HCT116 (cell line): ENCODE measurements at regions of chr19 and their contacts with region 1.

Region 1: GRCh38 chr19:2475702-2476450 is at the start of gene GADD45B:
- DNase-seq: peak; percentile 95
- ATAC-seq: peak; percentile 73
- H3K4me3 ChIP-seq: peak within 1 kb of the TSS; percentile 96 to 99
- H3K27ac ChIP-seq: peak within 1 kb of the TSS; percentile 78
- H3K4me1 ChIP-seq: peaks cover 18 to 45% of the 10 kb centered on the region in 2 experiments
- H3K27me3 ChIP-seq: no peaks in the 10 kb centered on the region
- CTCF ChIP-seq: no peak
- POLR2A ChIP-seq: peak; percentile 100
- RAD21 ChIP-seq: peak; percentile 54
- total RNA-seq, gene GADD45B: 37.9 TPM

Region 2: DNA sequence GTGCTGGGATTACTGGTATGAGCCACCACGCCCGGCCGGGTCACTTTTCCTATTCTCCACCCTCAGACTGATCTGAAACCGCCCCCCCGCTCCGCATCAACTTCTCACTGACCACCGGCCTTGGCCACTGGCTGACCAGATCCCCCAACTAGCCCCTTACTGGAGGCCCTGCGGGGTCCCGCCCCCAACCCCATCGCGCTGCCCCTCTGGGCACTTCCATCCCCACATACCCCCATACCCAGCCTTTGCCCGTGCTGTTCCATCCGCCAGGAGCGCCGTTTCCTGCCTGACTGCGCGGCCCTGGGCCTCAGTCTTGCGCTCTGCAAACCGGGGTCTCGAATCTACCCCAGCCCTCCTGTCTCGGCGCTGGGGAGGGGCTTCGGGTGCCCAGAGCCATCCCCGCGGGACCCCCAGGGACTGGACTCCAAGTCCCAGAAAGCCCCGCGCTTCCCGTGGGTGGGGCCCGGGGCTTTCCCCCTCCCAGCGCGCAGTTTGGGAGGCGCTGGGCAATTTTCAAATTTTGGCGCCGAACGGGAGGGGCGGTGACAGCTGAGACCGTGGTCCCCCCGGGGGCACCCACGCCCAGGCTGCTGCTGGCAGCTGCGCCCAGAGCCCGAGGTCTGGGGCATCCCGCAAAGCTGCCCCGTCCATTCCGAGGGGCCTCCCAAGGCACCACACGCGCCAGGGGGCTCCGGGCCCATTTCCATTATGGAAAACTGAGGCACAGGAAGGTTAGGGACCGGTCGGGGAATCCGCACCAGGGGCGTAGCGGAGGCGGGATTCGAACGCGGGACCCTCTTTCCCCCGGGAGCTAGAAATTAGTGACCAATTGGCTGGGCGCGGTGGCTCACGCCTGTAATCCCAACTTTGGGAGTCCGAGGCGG is 13.9 kb before region 1 on chr19:
- CTCF ChIA-PET with region 1: interaction called, 5 read pairs
- POLR2A ChIA-PET with region 1: interaction called, 44 read pairs
- RAD21 ChIA-PET with region 1: interaction called in 1 of 2 experiments, 4 read pairs
- intact Hi-C with region 1: no loop called
- DNase-seq: peak; percentile 60
- ATAC-seq: peak; percentile 73
- H3K4me3 ChIP-seq: peak overlapping the region; percentile 69 to 74
- H3K27ac ChIP-seq: peak overlapping the region; percentile 88
- H3K4me1 ChIP-seq: peaks cover 9 to 53% of the 10 kb centered on the region in 2 experiments; a peak in 3 of 4 replicates
- H3K27me3 ChIP-seq: no peaks in the 10 kb centered on the region
- CTCF ChIP-seq: peak in 2 of 3 experiments; percentile 24 to 30; a peak in 4 of 6 replicates
- POLR2A ChIP-seq: no peak
- RAD21 ChIP-seq: no peak

Region 3: DNA sequence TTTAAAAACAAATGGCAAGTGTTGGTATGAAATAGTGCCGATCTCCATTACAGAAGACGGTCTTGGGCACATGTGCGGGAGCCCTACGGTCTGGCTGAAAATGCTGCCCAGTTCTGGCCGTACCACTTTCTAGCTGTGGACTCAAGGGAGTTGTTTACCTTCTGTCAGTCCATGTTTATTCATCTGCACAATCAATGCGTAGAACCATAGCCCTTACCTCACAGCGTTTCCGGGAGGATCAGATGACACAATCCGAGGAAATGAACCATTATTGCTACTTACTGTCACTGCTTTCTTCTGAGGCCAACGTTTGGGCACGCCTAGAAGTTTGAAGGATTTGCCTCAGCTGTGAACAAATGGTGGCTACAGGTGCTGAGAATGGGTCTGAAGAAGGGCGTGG is 31.2 kb after region 1 on chr19:
- CTCF ChIA-PET with region 1: no interaction called
- POLR2A ChIA-PET with region 1: interaction called, 46 read pairs
- RAD21 ChIA-PET with region 1: interaction called in 1 of 2 experiments, 5 read pairs
- intact Hi-C with region 1: no loop called
- DNase-seq: peak; percentile 75
- ATAC-seq: peak; percentile 29
- H3K4me3 ChIP-seq: peak overlapping the region; percentile 10 to 48; a peak in 3 of 4 replicates
- H3K27ac ChIP-seq: peak overlapping the region; percentile 55
- H3K4me1 ChIP-seq: peaks cover 42 to 64% of the 10 kb centered on the region in 2 experiments
- H3K27me3 ChIP-seq: no peaks in the 10 kb centered on the region
- CTCF ChIP-seq: no peak
- POLR2A ChIP-seq: no peak
- RAD21 ChIP-seq: no peak

Region 4: DNA sequence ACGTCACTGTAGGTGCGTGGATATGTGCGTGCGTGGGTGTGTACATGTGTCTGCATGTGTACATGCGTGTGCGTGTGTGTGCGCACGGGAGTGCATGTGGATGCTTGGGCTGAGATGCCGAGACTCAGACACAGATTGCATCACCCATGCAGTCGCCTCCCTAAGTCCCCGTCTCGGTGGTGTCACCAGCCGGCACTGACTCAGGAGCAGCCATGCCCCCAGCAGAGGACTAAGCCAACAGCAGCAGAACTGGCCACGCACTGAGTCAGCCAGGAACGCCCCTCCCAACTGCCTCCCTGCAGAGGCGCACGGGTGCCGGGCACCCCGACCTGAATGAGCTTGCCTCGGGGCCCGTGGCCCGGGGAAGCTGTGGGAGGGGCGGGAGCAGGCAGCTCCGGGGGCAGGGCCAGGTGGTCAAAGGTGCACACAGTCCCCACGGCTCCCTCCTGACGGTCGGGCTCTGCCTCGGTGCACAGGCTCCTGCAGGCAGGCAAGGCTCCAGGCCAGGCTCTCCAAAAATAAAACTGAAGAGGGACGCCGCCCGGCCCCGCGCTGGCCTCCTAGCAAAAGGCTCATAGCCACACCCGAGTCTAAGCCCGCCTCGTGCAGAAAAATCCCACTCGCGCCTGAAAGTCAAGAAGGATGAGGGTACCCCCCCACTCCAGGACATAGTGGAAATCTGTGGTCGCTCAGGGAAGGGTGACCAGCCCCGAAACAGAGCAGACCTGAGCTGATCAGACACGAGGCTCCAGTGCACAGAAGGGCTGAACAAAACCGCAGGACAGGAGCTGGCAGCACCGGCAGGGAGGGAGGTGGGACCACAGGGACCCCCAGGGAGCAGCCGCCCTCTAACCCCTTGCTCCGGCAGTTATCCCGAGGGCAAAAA is 49.2 kb after region 1 on chr19:
- CTCF ChIA-PET with region 1: no interaction called
- POLR2A ChIA-PET with region 1: interaction called, 73 read pairs
- RAD21 ChIA-PET with region 1: interaction called, 5 to 6 read pairs
- intact Hi-C with region 1: loop called (anchors 1 kb)
- DNase-seq: peak; percentile 87
- ATAC-seq: peak; percentile 82
- H3K4me3 ChIP-seq: peak overlapping the region; percentile 31 to 56
- H3K27ac ChIP-seq: peak overlapping the region; percentile 87
- H3K4me1 ChIP-seq: peaks cover 61 to 79% of the 10 kb centered on the region in 2 experiments
- H3K27me3 ChIP-seq: no peaks in the 10 kb centered on the region
- CTCF ChIP-seq: no peak
- POLR2A ChIP-seq: peak; percentile 53
- RAD21 ChIP-seq: peak; percentile 40

Region 5: DNA sequence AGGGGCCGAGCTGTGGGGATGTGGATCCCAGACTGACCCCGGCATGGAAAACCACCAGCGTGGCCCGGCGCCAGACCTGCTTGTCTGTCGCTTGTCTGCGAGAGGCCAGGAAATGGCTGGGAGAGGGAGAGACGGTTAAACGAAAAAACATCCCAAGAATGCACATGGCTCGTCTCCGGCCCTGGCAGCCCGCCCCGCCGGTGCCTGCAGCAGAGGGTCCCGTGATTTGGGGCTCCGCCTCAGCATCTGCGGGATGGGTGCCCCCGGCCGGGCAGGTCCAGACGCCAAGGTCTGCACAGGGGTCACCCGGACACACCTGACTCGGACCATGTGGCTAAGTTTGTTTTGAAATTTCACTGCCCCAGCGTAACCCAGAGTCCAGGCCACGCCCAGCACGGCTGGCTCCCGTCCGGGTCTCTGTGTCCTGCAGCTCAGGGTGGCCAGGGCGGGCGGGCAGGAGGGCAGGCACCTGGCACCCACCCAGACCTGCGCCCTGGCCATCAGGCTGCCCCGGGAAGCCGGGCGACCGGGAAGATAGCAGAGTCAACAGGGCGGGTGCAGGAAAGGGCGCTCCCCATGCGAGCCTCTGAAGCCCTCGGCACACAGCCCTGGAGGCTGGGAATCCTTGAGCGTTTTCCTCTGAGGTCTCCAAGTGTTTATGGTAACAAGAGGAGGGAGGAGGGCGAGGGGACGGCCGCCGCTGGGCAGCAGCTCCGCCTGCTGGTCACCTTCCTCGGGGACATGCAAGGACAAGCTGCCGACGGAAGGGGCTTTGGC is 103.2 kb after region 1 on chr19:
- CTCF ChIA-PET with region 1: interaction called, 24 read pairs
- POLR2A ChIA-PET with region 1: interaction called, 91 read pairs
- RAD21 ChIA-PET with region 1: interaction called, 10 read pairs
- intact Hi-C with region 1: loop called (anchors 1 kb)
- DNase-seq: peak; percentile 78
- ATAC-seq: peak; percentile 85
- H3K4me3 ChIP-seq: peak overlapping the region; percentile 48 to 64
- H3K27ac ChIP-seq: peak overlapping the region; percentile 59
- H3K4me1 ChIP-seq: peaks cover 27 to 39% of the 10 kb centered on the region in 2 experiments
- H3K27me3 ChIP-seq: no peaks in the 10 kb centered on the region
- CTCF ChIP-seq: peak; percentile 86 to 90 (median 88)
- POLR2A ChIP-seq: no peak
- RAD21 ChIP-seq: peak; percentile 99

Region 6: DNA sequence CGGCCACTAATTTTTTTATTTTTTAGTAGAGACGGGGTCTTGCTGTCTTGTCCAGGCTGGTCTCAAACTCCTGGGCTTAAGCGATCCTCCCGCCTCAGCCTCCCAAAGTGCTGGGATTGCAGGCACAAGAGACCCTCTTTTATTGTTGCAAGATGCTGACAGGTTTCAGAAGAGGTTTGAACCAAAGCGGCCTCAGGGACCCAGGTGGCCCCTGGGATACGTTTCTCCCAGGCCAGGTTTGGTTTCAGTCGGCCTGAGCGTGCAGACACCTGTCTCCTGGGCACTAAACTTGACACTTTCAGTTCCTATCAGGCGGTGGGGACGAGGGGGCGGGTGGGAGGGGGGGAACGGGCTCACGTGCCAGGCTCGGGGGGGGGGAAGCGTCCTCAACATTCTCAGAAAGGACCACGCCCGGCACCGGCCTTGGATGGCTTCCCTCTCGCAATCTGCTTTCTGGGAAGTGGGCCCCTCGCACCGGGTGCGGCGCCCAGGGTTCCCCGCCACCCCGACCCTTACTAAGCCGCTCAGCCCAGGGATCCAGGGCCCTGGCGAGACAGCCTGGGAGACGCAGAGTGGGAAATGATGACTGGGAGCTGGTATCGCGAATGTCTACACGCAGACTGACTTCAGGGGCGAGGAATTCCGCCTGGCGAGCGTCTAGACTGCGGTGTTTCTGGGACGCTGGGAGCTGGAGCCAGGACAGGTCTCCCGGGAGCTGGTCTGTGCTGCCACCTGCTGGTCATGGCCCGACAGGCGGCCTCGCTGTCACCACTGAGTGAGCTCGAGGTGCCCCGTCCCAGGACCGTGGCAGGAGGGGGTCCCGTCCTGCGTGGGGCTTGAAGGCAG is 135.0 kb after region 1 on chr19:
- CTCF ChIA-PET with region 1: interaction called, 23 read pairs
- POLR2A ChIA-PET with region 1: interaction called, 67 read pairs
- RAD21 ChIA-PET with region 1: interaction called, 9 to 11 read pairs
- intact Hi-C with region 1: loop called (anchors 1 kb)
- DNase-seq: peak; percentile 59
- ATAC-seq: peak; percentile 94
- H3K4me3 ChIP-seq: peak overlapping the region; percentile 36 to 51
- H3K27ac ChIP-seq: no peak overlapping the region
- H3K4me1 ChIP-seq: peaks cover 8 to 21% of the 10 kb centered on the region in 2 experiments; a peak in 3 of 4 replicates
- H3K27me3 ChIP-seq: no peaks in the 10 kb centered on the region
- CTCF ChIP-seq: peak; percentile 90 to 95 (median 91)
- POLR2A ChIP-seq: no peak
- RAD21 ChIP-seq: peak; percentile 99

Region 7: GRCh38 chr19:2627319-2627829 is 151.5 kb after region 1 on chr19:
- CTCF ChIA-PET with region 1: interaction called, 3 read pairs
- POLR2A ChIA-PET with region 1: interaction called, 29 read pairs
- RAD21 ChIA-PET with region 1: interaction called in 1 of 2 experiments, 4 read pairs
- intact Hi-C with region 1: no loop called
- DNase-seq: peak; percentile 92
- ATAC-seq: peak; percentile 88
- H3K4me3 ChIP-seq: no peak overlapping the region
- H3K27ac ChIP-seq: peak overlapping the region; percentile 25
- H3K4me1 ChIP-seq: peaks cover 28 to 39% of the 10 kb centered on the region in 2 experiments
- H3K27me3 ChIP-seq: no peaks in the 10 kb centered on the region
- CTCF ChIP-seq: no peak
- POLR2A ChIP-seq: no peak
- RAD21 ChIP-seq: no peak